Pancreas (tissue), 10 donors: ENCODE measurements at regions of chr1 and their contacts with region 1.

Region 1: GRCh38 chr1:31955917-31956736 is 18.0 kb upstream of the PTP4A2 start:
- DNase-seq: peak in 5 of 6 donors; percentile 41 to 85 (median 64)
- ATAC-seq: peak; percentile 70 to 90 (median 88)
- H3K4me3 ChIP-seq: no peak overlapping the region
- H3K27ac ChIP-seq: peak overlapping the region in 3 of 4 donors; percentile 65 to 91 (median 86)
- H3K4me1 ChIP-seq: peaks cover 0 to 23% (median 0%) of the 10 kb centered on the region in 3 donors
- H3K27me3 ChIP-seq: no peaks in the 10 kb centered on the region
- CTCF ChIP-seq: no peak

Region 2: GRCh38 chr1:31866450-31867032 is 89.6 kb before region 1 on chr1:
- intact Hi-C with region 1: loop called in 1 of 3 experiments (anchors 10 kb)
- DNase-seq: no peak
- ATAC-seq: no peak
- H3K4me3 ChIP-seq: no peak overlapping the region
- H3K27ac ChIP-seq: no peak overlapping the region
- H3K4me1 ChIP-seq: no peaks in the 10 kb centered on the region
- H3K27me3 ChIP-seq: no peaks in the 10 kb centered on the region
- CTCF ChIP-seq: no peak